ENCODE measurements at regions of chr4 and their contacts with region 1.

Region 1: DNA sequence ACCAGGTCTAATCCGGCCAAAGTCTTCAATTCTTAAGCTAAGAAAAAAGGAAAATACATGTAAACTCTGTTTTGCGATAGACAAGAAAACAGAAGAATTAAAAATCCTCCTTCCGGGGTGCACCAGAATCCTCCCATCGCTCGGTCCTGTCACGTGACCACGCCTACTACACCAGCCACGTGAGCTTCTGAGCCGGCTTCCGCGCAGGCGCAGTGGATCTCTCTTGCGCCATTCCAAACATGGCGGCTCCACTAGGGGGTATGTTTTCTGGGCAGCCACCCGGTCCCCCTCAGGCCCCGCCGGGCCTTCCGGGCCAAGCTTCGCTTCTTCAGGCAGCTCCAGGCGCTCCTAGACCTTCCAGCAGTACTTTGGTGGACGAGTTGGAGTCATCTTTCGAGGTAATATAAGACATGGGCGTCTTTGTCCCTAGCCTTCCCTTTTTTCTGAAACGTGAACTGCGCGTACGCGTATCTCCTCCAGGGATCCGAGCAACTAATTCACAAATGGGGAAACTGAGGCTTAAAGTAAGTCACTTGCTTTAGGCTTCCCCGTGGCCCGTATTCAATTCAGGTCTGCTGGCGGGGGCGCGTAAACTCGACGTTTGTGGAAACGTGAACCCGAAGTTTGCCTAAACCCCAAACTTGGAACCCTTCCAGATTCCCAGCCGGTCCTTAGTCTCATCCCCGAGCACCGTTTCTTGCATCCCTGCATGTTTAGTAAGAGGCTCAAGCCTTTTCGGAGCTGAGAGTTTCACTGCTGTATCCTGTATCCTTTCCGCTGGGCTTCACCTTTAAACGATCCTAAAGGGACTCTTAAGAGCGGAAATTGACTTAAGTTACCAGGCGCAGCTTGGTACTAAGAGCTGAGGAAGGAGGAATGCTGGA is at the start of gene MED28:
- DNase-seq: peak; percentile 96
- ATAC-seq: peak; percentile 91
- H3K4me3 ChIP-seq: peak within 1 kb of the TSS; percentile 73 to 100 (median 97)
- H3K4me3 Mint-ChIP-seq: peak within 1 kb of the TSS; percentile 100
- H3K27ac ChIP-seq: peak within 1 kb of the TSS; percentile 79 to 94
- H3K27ac Mint-ChIP-seq: peak within 1 kb of the TSS; percentile 91
- H3K4me1 ChIP-seq: peaks cover 16 to 35% of the 10 kb centered on the region in 2 donors
- H3K4me1 Mint-ChIP-seq: peaks cover 44% of the 10 kb centered on the region
- H3K27me3 ChIP-seq: no peaks in the 10 kb centered on the region
- H3K27me3 Mint-ChIP-seq: no peaks in the 10 kb centered on the region
- CTCF ChIP-seq: no peak
- total RNA-seq, gene MED28: 81.5 and 83.8 TPM in 2 replicates

Region 2: GRCh38 chr4:17511509-17511949 is 103.1 kb before region 1 on chr4:
- CTCF ChIA-PET with region 1: no interaction called
- POLR2A ChIA-PET with region 1: no interaction called
- intact Hi-C with region 1: no loop called
- DNase-seq: no peak
- ATAC-seq: peak; percentile 41
- H3K4me3 ChIP-seq: peak overlapping the region; percentile 48 to 79 (median 61)
- H3K4me3 Mint-ChIP-seq: peak overlapping the region; percentile 87
- H3K27ac ChIP-seq: no peak overlapping the region
- H3K27ac Mint-ChIP-seq: peak overlapping the region; percentile 16
- H3K4me1 ChIP-seq: peaks cover 11 to 16% of the 10 kb centered on the region in 2 donors
- H3K4me1 Mint-ChIP-seq: peaks cover 19% of the 10 kb centered on the region
- H3K27me3 ChIP-seq: no peaks in the 10 kb centered on the region
- H3K27me3 Mint-ChIP-seq: peaks cover 13% of the 10 kb centered on the region
- CTCF ChIP-seq: no peak

Region 3: DNA sequence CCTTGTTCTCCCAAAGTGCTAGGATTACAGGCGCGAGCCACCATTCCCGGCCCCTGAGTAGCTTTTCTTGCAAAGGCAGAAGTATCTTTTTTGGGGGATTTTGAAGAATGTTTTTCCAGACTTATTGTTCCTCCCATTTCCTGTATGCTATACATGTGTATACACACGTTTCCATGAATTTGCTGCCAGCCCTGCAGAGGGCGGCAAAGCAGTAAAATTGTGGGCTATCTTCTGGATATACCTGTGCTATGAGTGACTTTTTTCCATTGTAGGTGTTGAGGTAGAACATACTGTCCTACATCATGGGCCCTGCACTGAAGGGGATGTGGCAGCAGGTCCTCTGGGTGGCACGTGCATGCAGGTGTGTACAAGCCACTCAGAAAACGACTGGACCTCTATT is 17.1 kb before region 1 on chr4:
- CTCF ChIA-PET with region 1: interaction called, 17 read pairs
- POLR2A ChIA-PET with region 1: interaction called, 10 read pairs
- intact Hi-C with region 1: loop called (anchors 1 kb)
- DNase-seq: no peak
- ATAC-seq: no peak
- H3K4me3 ChIP-seq: no peak overlapping the region
- H3K4me3 Mint-ChIP-seq: no peak overlapping the region
- H3K27ac ChIP-seq: no peak overlapping the region
- H3K27ac Mint-ChIP-seq: no peak overlapping the region
- H3K4me1 ChIP-seq: peaks cover 16 to 28% of the 10 kb centered on the region in 2 donors
- H3K4me1 Mint-ChIP-seq: peaks cover 30% of the 10 kb centered on the region
- H3K27me3 ChIP-seq: no peaks in the 10 kb centered on the region
- H3K27me3 Mint-ChIP-seq: no peaks in the 10 kb centered on the region
- CTCF ChIP-seq: no peak

Measured in B cell (primary cell).